ENCODE measurements at regions of chr13 and their contacts with region 1.

Region 1: DNA sequence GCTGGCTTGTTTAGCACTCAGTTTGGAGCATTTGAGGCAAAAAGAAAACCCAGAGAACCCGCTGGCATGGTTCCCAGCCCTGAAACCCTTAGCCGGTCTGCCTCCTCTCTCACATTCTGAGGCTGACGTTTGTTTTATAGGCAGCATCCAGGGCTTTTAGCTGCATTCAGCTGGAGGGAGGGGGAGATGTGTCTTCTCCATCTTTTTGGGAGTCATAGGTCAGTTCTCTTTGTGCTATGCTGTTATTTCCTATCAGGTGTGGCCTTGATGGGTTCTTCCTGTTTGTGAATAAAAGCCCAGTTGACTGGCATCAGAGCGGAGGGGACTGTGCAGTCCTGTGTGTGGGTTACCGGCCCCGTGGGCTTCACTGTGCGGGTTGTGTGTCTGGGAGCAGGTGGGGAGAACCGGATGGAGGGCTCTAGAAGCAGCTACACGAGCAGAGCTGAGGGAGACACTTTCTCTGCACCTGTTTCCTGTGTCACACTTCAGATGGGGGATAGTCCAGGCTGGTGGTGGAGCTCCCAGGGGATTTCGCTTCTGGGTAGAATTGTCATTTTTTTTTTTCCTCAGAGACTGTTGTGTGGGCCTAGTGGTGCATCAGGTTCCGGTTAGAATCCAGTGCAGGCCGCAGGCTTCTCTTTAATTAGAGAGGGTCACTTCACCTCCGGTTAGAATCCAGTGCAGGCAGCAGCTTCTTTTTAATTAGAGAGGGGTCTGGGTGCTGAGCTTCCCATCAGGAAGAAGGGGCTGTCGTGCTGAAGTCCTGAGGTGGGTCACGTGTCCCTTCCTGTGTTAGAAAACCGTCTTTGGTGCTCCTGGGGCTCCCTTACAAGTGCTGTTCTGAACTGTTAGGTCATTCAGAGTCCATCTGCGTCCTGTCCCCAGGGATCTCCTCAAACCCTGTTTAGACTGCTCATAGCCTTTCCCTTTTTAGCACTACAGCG is 69.6 kb downstream of the ARHGEF7 start:
- DNase-seq: peak; percentile 96
- ATAC-seq: peak; percentile 91
- H3K4me3 ChIP-seq: peak overlapping the region; percentile 21 to 60 (median 50)
- H3K4me3 Mint-ChIP-seq: peak overlapping the region; percentile 86
- H3K27ac ChIP-seq: peak overlapping the region; percentile 92 to 95
- H3K27ac Mint-ChIP-seq: peak overlapping the region; percentile 97
- H3K4me1 ChIP-seq: peaks cover 75 to 96% of the 10 kb centered on the region in 2 donors
- H3K4me1 Mint-ChIP-seq: peaks cover 97% of the 10 kb centered on the region
- H3K27me3 ChIP-seq: no peaks in the 10 kb centered on the region
- H3K27me3 Mint-ChIP-seq: no peaks in the 10 kb centered on the region
- CTCF ChIP-seq: no peak

Region 2: GRCh38 chr13:110471833-110472162 is 712.9 kb before region 1 on chr13:
- CTCF ChIA-PET with region 1: no interaction called
- POLR2A ChIA-PET with region 1: no interaction called
- intact Hi-C with region 1: loop called (anchors 10 kb)
- DNase-seq: peak; percentile 89
- ATAC-seq: peak; percentile 94
- H3K4me3 ChIP-seq: peak overlapping the region in 2 of 5 experiments; percentile 17 to 19
- H3K4me3 Mint-ChIP-seq: peak overlapping the region; percentile 85
- H3K27ac ChIP-seq: peak overlapping the region; percentile 80 to 83
- H3K27ac Mint-ChIP-seq: peak overlapping the region; percentile 89
- H3K4me1 ChIP-seq: peaks cover 38 to 50% of the 10 kb centered on the region in 2 donors
- H3K4me1 Mint-ChIP-seq: peaks cover 49% of the 10 kb centered on the region
- H3K27me3 ChIP-seq: peaks cover 0 to 2% (median 0%) of the 10 kb centered on the region in 4 experiments
- H3K27me3 Mint-ChIP-seq: no peaks in the 10 kb centered on the region
- CTCF ChIP-seq: no peak

Region 3: DNA sequence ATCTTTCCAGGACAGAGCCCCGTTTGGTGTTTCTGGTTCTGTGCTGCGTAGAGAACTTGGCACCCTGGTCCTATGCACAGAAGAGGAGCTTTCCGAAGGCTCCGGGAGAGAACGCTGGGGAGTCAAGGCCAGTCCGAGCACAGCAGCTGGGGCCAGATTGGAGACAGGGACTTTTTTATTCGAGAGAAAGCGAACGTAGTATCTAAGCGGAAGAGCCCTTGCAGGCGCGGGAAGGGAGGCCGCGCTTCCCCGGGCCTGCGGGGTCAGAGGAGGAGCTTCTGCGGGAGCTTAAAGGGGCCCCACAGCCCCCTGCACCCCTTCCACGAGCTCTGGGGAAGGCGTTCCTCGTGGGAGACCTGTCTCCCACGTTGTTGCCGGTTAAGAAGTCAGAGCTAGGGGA is 118.2 kb before region 1 on chr13:
- CTCF ChIA-PET with region 1: interaction called, 20 read pairs
- POLR2A ChIA-PET with region 1: no interaction called
- intact Hi-C with region 1: no loop called
- DNase-seq: no peak
- ATAC-seq: no peak
- H3K4me3 ChIP-seq: peak overlapping the region in 1 of 5 experiments; percentile 24
- H3K4me3 Mint-ChIP-seq: peak overlapping the region; percentile 78
- H3K27ac ChIP-seq: no peak overlapping the region
- H3K27ac Mint-ChIP-seq: no peak overlapping the region
- H3K4me1 ChIP-seq: peaks cover 8 to 11% of the 10 kb centered on the region in 2 donors
- H3K4me1 Mint-ChIP-seq: peaks cover 9% of the 10 kb centered on the region
- H3K27me3 ChIP-seq: peaks cover 0 to 24% (median 7%) of the 10 kb centered on the region in 4 experiments
- H3K27me3 Mint-ChIP-seq: peaks cover 42% of the 10 kb centered on the region
- CTCF ChIP-seq: no peak

Region 4: DNA sequence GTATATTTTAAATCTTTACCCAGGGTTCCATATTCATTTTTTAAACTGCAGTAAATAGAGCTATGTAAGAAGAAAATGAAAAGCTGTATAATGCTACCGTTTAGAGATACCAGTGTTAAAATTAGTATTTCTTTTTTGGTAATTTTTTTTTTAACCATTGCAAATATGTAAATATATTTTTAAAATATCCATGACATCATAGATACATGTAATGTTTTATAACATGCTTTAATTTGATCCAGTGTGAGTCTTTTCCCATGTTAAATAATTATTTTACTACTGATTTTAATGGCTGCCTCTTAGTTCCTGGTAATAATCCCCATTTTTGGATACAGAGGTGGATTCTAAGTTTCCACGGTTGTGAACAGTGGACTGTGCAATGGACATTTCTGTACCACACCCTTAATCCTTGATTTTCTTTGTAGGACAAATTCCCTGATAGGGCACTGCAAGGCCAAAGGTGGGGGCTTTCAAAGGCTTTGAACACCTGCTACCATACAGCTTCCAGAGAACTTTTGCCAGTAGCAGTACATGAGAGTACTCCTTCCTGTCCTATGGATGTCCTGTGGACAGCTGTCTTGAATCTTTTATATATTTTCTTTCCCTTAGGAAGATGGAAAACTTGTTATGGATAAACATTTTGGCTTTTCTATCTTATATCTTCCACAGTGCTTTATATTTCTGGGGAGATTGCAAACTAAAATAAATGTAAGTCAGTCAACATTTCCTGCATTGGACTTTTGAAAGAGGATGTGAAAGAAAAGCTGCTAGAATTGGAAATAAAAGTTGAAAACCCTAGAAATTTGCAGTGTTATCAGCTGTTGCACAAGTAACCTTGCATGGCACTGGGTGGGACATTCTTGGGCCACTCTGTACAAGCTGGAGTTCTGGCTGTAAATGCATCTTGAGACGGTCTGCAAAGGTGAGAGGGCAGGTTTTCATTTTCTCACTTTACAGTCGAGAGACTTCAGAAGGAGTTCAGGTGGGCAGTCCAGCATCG is 22.8 kb before region 1 on chr13:
- CTCF ChIA-PET with region 1: interaction called, 8 read pairs
- POLR2A ChIA-PET with region 1: interaction called, 4 read pairs
- intact Hi-C with region 1: loop called (anchors 2 kb)
- DNase-seq: no peak
- ATAC-seq: no peak
- H3K4me3 ChIP-seq: peak overlapping the region in 1 of 5 experiments; percentile 23
- H3K4me3 Mint-ChIP-seq: peak overlapping the region; percentile 62
- H3K27ac ChIP-seq: peak overlapping the region in 1 of 2 donors; percentile 8
- H3K27ac Mint-ChIP-seq: peak overlapping the region; percentile 65
- H3K4me1 ChIP-seq: peaks cover 42 to 50% of the 10 kb centered on the region in 2 donors
- H3K4me1 Mint-ChIP-seq: peaks cover 67% of the 10 kb centered on the region
- H3K27me3 ChIP-seq: no peaks in the 10 kb centered on the region
- H3K27me3 Mint-ChIP-seq: no peaks in the 10 kb centered on the region
- CTCF ChIP-seq: no peak

Region 5: DNA sequence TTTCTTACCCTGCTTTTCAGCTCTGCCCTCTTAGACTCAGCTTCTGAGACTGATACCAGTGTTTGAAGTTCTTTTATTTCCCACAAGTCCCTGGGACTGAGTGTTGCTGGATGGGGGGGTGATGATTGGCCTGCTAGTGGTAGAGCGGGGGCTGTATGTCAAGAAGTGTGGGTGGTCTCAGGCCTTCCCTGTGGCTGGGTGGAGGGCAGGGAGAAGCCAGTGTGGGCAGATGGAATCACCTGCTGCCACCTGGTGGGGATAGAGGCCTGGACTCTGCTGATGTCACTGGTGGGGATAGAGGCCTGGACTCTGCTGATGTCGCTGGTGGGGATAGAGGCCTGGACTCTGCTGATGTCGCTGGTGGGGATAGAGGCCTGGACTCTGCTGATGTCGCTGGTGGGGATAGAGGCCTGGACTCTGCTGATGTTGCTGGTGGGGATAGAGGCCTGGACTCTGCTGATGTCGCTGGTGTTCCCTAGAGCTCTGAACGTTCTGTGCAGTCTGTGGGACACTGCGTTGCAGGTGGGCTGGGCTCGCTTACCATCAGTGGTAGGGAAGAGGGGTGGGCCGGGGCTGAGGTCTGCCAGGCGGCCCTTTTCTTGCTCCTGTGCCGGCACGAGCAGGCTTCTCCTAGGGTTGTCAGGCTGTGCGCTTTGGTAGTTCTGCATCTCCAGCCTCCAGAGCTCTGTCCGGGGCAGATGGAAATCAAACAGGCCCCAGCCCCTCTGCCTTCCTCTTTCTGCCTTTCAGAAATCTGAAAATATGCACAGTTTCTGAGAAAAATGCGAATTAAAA is 31.6 kb after region 1 on chr13:
- CTCF ChIA-PET with region 1: interaction called, 14 read pairs
- POLR2A ChIA-PET with region 1: interaction called, 3 read pairs
- intact Hi-C with region 1: no loop called
- DNase-seq: peak; percentile 61
- ATAC-seq: peak; percentile 74
- H3K4me3 ChIP-seq: no peak overlapping the region
- H3K4me3 Mint-ChIP-seq: no peak overlapping the region
- H3K27ac ChIP-seq: no peak overlapping the region
- H3K27ac Mint-ChIP-seq: peak overlapping the region; percentile 55
- H3K4me1 ChIP-seq: peaks cover 18 to 31% of the 10 kb centered on the region in 2 donors
- H3K4me1 Mint-ChIP-seq: peaks cover 47% of the 10 kb centered on the region
- H3K27me3 ChIP-seq: no peaks in the 10 kb centered on the region
- H3K27me3 Mint-ChIP-seq: no peaks in the 10 kb centered on the region
- CTCF ChIP-seq: peak; percentile 62